GM12878 (cell line): ENCODE measurements at regions of chr11 and their contacts with region 1.

Region 1: GRCh38 chr11:19903620-19904069 is 191.0 kb downstream of the NAV2 start:
- DNase-seq: peak; percentile 3
- ATAC-seq: peak; percentile 78
- H3K4me3 ChIP-seq: no peak overlapping the region
- H3K27ac ChIP-seq: no peak overlapping the region
- H3K4me1 ChIP-seq: no peaks in the 10 kb centered on the region
- H3K27me3 ChIP-seq: no peaks in the 10 kb centered on the region
- CTCF ChIP-seq: peak; percentile 77 to 87 (median 78)
- EP300 ChIP-seq: no peak
- POLR2A ChIP-seq: no peak
- RAD21 ChIP-seq: peak; percentile 94

Region 2: GRCh38 chr11:19259487-19260345 is 643.9 kb before region 1 on chr11:
- CTCF ChIA-PET with region 1: no interaction called
- POLR2A ChIA-PET with region 1: no interaction called
- RAD21 ChIA-PET with region 1: no interaction called
- SMC1A ChIA-PET with region 1: no interaction called
- in situ Hi-C with region 1: no loop called
- intact Hi-C with region 1: loop called (anchors 10 kb)
- DNase-seq: no peak
- ATAC-seq: peak; percentile 91
- H3K4me3 ChIP-seq: no peak overlapping the region
- H3K27ac ChIP-seq: no peak overlapping the region
- H3K4me1 ChIP-seq: no peaks in the 10 kb centered on the region; the same call in 1 of the 2 replicates
- H3K27me3 ChIP-seq: no peaks in the 10 kb centered on the region; a peak in 1 of 4 replicates
- CTCF ChIP-seq: peak; percentile 90 to 96 (median 93)
- EP300 ChIP-seq: no peak
- POLR2A ChIP-seq: no peak
- RAD21 ChIP-seq: peak; percentile 78

Region 3: GRCh38 chr11:19561011-19561410 is 342.6 kb before region 1 on chr11:
- CTCF ChIA-PET with region 1: interaction called, 91 read pairs
- POLR2A ChIA-PET with region 1: interaction called, 3 read pairs
- RAD21 ChIA-PET with region 1: interaction called, 48 read pairs
- SMC1A ChIA-PET with region 1: interaction called, 53 read pairs
- in situ Hi-C with region 1: loop called (anchors 5 kb)
- intact Hi-C with region 1: loop called (anchors 1 kb)
- DNase-seq: no peak
- ATAC-seq: no peak
- H3K4me3 ChIP-seq: no peak overlapping the region
- H3K27ac ChIP-seq: no peak overlapping the region
- H3K4me1 ChIP-seq: no peaks in the 10 kb centered on the region
- H3K27me3 ChIP-seq: no peaks in the 10 kb centered on the region; a peak in 1 of 4 replicates
- CTCF ChIP-seq: no peak
- EP300 ChIP-seq: no peak
- POLR2A ChIP-seq: no peak
- RAD21 ChIP-seq: no peak

Region 4: DNA sequence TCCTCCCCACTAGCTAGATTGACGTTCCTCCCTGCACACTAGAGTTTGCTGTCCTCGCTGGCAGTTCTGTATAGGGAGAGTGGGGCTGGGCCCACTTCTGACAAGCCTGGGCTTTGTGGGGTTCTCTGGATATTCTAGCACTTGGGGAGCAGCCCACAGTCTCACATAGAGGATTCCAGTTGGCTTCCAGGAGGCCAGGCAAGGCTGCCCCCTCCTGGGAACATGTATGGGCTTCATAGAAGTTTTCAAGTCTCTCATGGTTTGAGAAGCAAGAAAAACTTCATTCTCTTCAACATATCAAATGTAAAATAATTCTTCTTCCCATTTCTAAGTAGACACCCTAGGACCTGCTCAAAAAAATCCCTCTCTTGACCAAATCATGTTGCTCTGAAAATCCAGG is 103.5 kb before region 1 on chr11:
- CTCF ChIA-PET with region 1: interaction called, 10 read pairs
- POLR2A ChIA-PET with region 1: no interaction called
- RAD21 ChIA-PET with region 1: interaction called, 4 read pairs
- SMC1A ChIA-PET with region 1: interaction called, 3 read pairs
- in situ Hi-C with region 1: no loop called
- intact Hi-C with region 1: no loop called
- DNase-seq: no peak
- ATAC-seq: peak; percentile 52; the same call in 2 of the 3 replicates
- H3K4me3 ChIP-seq: no peak overlapping the region
- H3K27ac ChIP-seq: no peak overlapping the region
- H3K4me1 ChIP-seq: no peaks in the 10 kb centered on the region
- H3K27me3 ChIP-seq: no peaks in the 10 kb centered on the region
- CTCF ChIP-seq: peak; percentile 12 to 41 (median 15); a peak in 3 of 6 replicates
- EP300 ChIP-seq: no peak
- POLR2A ChIP-seq: no peak
- RAD21 ChIP-seq: peak; percentile 46

Region 5: GRCh38 chr11:19876750-19877149 is 26.9 kb before region 1 on chr11:
- CTCF ChIA-PET with region 1: interaction called, 13 read pairs
- POLR2A ChIA-PET with region 1: no interaction called
- RAD21 ChIA-PET with region 1: no interaction called
- SMC1A ChIA-PET with region 1: no interaction called
- in situ Hi-C with region 1: no loop called
- intact Hi-C with region 1: no loop called
- DNase-seq: no peak
- ATAC-seq: no peak
- H3K4me3 ChIP-seq: no peak overlapping the region
- H3K27ac ChIP-seq: no peak overlapping the region
- H3K4me1 ChIP-seq: no peaks in the 10 kb centered on the region
- H3K27me3 ChIP-seq: no peaks in the 10 kb centered on the region
- CTCF ChIP-seq: no peak
- EP300 ChIP-seq: no peak
- POLR2A ChIP-seq: no peak
- RAD21 ChIP-seq: no peak

Region 6: GRCh38 chr11:20127671-20128527 is 224.3 kb after region 1 on chr11:
- CTCF ChIA-PET with region 1: interaction called, 19 read pairs
- POLR2A ChIA-PET with region 1: no interaction called
- RAD21 ChIA-PET with region 1: interaction called, 15 read pairs
- SMC1A ChIA-PET with region 1: interaction called, 7 read pairs
- in situ Hi-C with region 1: no loop called
- intact Hi-C with region 1: no loop called
- DNase-seq: no peak
- ATAC-seq: peak; percentile 94
- H3K4me3 ChIP-seq: no peak overlapping the region
- H3K27ac ChIP-seq: no peak overlapping the region
- H3K4me1 ChIP-seq: no peaks in the 10 kb centered on the region
- H3K27me3 ChIP-seq: peaks cover 1 to 7% of the 10 kb centered on the region in 2 experiments; a peak in 3 of 4 replicates
- CTCF ChIP-seq: peak; percentile 84 to 96 (median 87); a peak in 5 of 6 replicates
- EP300 ChIP-seq: no peak
- POLR2A ChIP-seq: no peak
- RAD21 ChIP-seq: peak; percentile 98